ENCODE measurements at regions of chr2 and their contacts with region 1.

Region 1: DNA sequence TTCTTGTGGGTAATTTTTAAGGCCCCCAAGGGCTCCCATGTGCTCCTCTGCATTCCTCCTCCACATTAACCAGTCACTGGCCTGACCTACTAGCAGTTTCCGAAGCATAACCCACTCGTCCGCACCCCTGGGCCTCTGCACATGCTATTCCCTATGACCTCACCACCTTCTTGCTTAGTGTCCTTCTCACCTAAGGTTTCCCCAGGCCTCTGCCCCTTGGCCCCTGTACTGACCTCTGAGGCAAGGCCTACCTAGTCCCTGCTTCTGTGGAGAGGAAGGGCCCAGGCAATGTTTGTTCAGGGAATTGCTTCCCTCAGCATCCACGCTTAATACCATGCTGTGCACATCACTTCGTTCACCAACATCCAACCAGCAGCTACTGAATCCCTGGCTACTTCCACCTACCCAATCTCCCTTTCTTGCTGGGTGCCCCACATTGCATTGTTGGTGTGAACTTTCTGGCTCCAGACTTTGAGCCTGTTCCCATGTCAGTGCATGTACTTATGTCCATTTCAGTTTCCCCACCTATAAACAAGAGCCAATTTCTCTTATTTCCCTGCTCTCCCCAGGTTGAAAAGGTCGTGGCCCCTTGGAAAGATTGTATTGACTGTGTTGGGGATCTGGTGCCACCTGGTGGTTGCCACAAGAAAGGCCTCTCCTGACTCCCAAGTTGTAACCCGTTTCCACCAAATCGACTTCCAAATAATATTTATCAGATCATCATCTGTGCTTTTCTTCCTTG is 19.2 kb upstream of the TMEM177 start:
- DNase-seq: peak; percentile 47 to 59
- H3K4me3 ChIP-seq: no peak overlapping the region
- H3K27ac ChIP-seq: no peak overlapping the region
- H3K4me1 ChIP-seq: no peaks in the 10 kb centered on the region
- H3K27me3 ChIP-seq: no peaks in the 10 kb centered on the region
- CTCF ChIP-seq: peak in 5 of 6 experiments; percentile 61 to 92 (median 76)
- POLR2A ChIP-seq: no peak

Region 2: DNA sequence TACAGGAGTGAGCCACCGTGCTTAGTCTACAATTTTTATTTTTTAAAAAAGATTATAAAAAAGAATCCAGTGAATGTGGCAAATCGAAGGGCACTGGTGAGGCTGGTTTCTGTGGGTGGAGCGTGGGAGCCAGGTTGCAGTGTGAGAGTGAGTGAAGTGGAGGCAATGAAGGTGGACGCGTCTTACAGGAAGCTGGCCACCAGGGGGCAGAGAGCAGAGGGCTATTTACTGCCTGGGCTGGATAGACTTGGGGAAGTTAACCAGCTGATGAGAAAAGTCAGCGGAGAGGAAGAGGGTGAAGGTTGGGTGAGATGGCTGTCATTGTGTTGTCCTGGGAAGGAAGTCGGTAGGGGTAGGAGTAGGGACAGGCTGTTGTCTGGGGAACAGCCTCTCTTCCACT is 142.3 kb before region 1 on chr2:
- intact Hi-C with region 1: loop called (anchors 5 kb)
- DNase-seq: peak; percentile 74 to 82
- H3K4me3 ChIP-seq: no peak overlapping the region
- H3K27ac ChIP-seq: no peak overlapping the region
- H3K4me1 ChIP-seq: no peaks in the 10 kb centered on the region
- H3K27me3 ChIP-seq: no peaks in the 10 kb centered on the region
- CTCF ChIP-seq: peak in 5 of 6 experiments; percentile 53 to 80 (median 61)
- POLR2A ChIP-seq: no peak

Region 3: GRCh38 chr2:119713804-119714490 is 54.2 kb after region 1 on chr2:
- intact Hi-C with region 1: no loop called
- DNase-seq: peak; percentile 95
- H3K4me3 ChIP-seq: no peak overlapping the region
- H3K27ac ChIP-seq: peak overlapping the region; percentile 80 to 90 (median 83)
- H3K4me1 ChIP-seq: peaks cover 38 to 45% of the 10 kb centered on the region in 2 donors
- H3K27me3 ChIP-seq: no peaks in the 10 kb centered on the region
- CTCF ChIP-seq: no peak
- POLR2A ChIP-seq: no peak